WTC11 (cell line): ENCODE measurements at regions of chr1 and their contacts with region 1.

Region 1: GRCh38 chr1:205591522-205592351 is 40.1 kb downstream of the ELK4 start:
- DNase-seq: peak; percentile 97
- ATAC-seq: peak; percentile 86
- H3K4me3 Mint-ChIP-seq: peak overlapping the region; percentile 72
- H3K27ac Mint-ChIP-seq: peak overlapping the region; percentile 50; the same call in 1 of the 2 replicates
- H3K4me1 Mint-ChIP-seq: peaks cover 8% of the 10 kb centered on the region
- H3K27me3 Mint-ChIP-seq: peaks cover 10% of the 10 kb centered on the region
- CTCF ChIP-seq: peak; percentile 78

Region 2: DNA sequence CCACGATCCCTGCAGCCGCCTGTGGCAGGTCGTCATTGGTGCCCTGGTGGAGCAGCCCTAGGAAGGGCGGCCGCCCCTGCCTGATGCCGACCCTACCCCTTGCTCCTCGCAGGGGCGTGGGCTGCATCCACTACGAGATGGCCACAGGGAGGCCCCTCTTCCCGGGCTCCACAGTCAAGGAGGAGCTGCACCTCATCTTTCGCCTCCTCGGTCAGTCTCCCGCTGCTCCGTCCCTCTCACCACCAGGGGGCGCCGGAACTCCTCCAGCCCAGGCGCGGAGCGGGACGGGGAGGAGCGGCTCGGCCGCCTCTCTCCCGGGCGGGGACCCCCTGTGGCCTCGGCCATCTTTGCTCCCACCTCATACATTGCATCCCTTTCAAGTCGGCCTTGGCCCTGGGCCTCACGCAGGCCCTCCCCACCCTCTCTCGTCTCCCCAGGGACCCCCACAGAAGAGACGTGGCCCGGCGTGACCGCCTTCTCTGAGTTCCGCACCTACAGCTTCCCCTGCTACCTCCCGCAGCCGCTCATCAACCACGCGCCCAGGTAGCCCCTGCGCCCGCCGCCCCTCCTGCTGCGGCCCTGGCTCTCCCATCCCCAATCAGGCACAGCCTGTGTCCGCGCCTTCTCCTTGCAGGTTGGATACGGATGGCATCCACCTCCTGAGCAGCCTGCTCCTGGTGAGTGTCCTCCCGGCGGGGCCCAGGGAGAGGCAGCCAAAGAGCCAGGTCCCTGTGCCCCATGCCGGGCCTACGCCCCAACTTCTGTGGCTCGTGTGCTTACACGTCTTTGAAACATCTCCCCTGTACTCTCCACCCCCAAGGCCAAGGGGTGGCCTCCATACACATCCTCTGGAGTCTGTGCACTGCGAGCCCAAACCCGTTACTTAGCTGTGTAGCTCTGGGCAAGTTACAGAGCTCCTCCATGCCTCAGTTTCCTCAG is 62.6 kb before region 1 on chr1:
- CTCF ChIA-PET with region 1: interaction called, 25 read pairs
- POLR2A ChIA-PET with region 1: no interaction called
- DNase-seq: peak; percentile 94
- ATAC-seq: peak; percentile 84
- H3K4me3 Mint-ChIP-seq: no peak overlapping the region
- H3K27ac Mint-ChIP-seq: no peak overlapping the region
- H3K4me1 Mint-ChIP-seq: peaks cover 16% of the 10 kb centered on the region
- H3K27me3 Mint-ChIP-seq: no peaks in the 10 kb centered on the region
- CTCF ChIP-seq: peak; percentile 95

Region 3: GRCh38 chr1:205578780-205579606 is 12.7 kb before region 1 on chr1:
- CTCF ChIA-PET with region 1: interaction called, 36 read pairs
- POLR2A ChIA-PET with region 1: no interaction called
- DNase-seq: no peak
- ATAC-seq: no peak
- H3K4me3 Mint-ChIP-seq: no peak overlapping the region
- H3K27ac Mint-ChIP-seq: no peak overlapping the region
- H3K4me1 Mint-ChIP-seq: peaks cover 12% of the 10 kb centered on the region
- H3K27me3 Mint-ChIP-seq: peaks cover 11% of the 10 kb centered on the region; the same call in 1 of the 2 replicates
- CTCF ChIP-seq: no peak

Region 4: DNA sequence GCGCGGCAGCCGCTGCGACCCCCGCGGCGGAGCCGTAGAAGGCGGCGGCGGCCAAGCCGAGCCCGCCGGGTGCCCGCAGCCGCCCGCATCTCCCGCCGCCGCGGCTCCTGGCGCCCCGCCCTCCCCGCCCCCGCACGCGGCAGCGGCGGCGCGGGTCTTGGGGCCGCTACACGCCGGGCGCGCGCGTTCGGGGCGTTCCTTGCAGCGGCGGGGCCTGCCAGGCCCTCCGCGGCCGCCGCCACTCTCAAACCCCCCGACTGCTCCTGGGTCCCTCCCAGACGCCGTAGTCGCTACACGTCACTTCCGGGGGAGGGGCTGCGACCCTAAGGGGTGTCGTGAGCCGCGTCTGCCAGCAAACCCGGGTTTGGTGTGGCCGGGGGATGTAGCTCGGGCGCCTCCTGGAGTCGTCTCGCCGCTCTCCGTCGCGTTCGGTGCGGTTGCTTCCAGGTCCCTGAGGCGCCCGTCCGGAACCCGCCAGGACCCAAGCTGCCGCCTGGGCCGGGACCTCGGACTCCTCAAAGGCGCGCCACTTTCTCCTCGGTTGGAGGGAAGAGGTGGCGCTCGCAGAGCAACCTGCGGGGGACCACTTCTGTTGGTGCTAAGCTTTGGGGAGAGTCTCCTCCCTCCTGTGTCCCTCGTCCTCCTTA is 40.1 kb after region 1 on chr1 and contains the start of gene ELK4:
- CTCF ChIA-PET with region 1: interaction called, 76 read pairs
- POLR2A ChIA-PET with region 1: interaction called, 17 read pairs
- DNase-seq: peak; percentile 99
- ATAC-seq: peak; percentile 89
- H3K4me3 Mint-ChIP-seq: peak within 1 kb of the TSS; percentile 96
- H3K27ac Mint-ChIP-seq: peak within 1 kb of the TSS; percentile 100
- H3K4me1 Mint-ChIP-seq: peaks cover 27% of the 10 kb centered on the region
- H3K27me3 Mint-ChIP-seq: no peaks in the 10 kb centered on the region
- CTCF ChIP-seq: no peak
- total RNA-seq, gene ELK4: 34.4 to 39.0 TPM (median 37.5 TPM) in 3 replicates

Region 5: GRCh38 chr1:205700865-205701401 is 109.2 kb after region 1 on chr1:
- CTCF ChIA-PET with region 1: interaction called, 12 read pairs
- POLR2A ChIA-PET with region 1: no interaction called
- DNase-seq: peak; percentile 34
- ATAC-seq: peak; percentile 57
- H3K4me3 Mint-ChIP-seq: no peak overlapping the region
- H3K27ac Mint-ChIP-seq: no peak overlapping the region
- H3K4me1 Mint-ChIP-seq: peaks cover 17% of the 10 kb centered on the region
- H3K27me3 Mint-ChIP-seq: no peaks in the 10 kb centered on the region
- CTCF ChIP-seq: no peak

Region 6: GRCh38 chr1:206507284-206508129 is 915.8 kb after region 1 on chr1 and contains the start of gene RASSF5:
- CTCF ChIA-PET with region 1: no interaction called
- POLR2A ChIA-PET with region 1: no interaction called
- DNase-seq: peak; percentile 87
- ATAC-seq: peak; percentile 87
- H3K4me3 Mint-ChIP-seq: peak within 1 kb of the TSS; percentile 68
- H3K27ac Mint-ChIP-seq: no peak within 1 kb of the TSS
- H3K4me1 Mint-ChIP-seq: peaks cover 25% of the 10 kb centered on the region
- H3K27me3 Mint-ChIP-seq: peaks cover 76% of the 10 kb centered on the region
- CTCF ChIP-seq: no peak
- total RNA-seq, gene RASSF5: 1.7 to 2.1 TPM (median 1.7 TPM) in 3 replicates